ENCODE measurements at regions of chr11 and their contacts with region 1.

Region 1: GRCh38 chr11:120500414-120501071 is 11.0 kb upstream of the GRIK4 start:
- DNase-seq: peak in 1 of 2 donors; percentile 45
- ATAC-seq: peak in 1 of 2 donors; percentile 47
- H3K4me3 ChIP-seq: no peak overlapping the region
- H3K27ac ChIP-seq: no peak overlapping the region
- H3K4me1 ChIP-seq: peaks cover 0 to 5% of the 10 kb centered on the region in 2 donors
- H3K27me3 ChIP-seq: peaks cover 4 to 21% (median 14%) of the 10 kb centered on the region in 3 donors
- CTCF ChIP-seq: no peak
- POLR2A ChIP-seq: no peak

Region 2: GRCh38 chr11:120375076-120375475 is 125.5 kb before region 1 on chr11:
- in situ Hi-C with region 1: no loop called
- intact Hi-C with region 1: no loop called
- DNase-seq: no peak
- ATAC-seq: no peak
- H3K4me3 ChIP-seq: no peak overlapping the region
- H3K27ac ChIP-seq: peak overlapping the region; percentile 18 to 68 (median 26)
- H3K4me1 ChIP-seq: peaks cover 50 to 52% of the 10 kb centered on the region in 2 donors
- H3K27me3 ChIP-seq: no peaks in the 10 kb centered on the region
- CTCF ChIP-seq: no peak
- POLR2A ChIP-seq: no peak

Region 3: GRCh38 chr11:120682866-120683265 is 182.3 kb after region 1 on chr11:
- in situ Hi-C with region 1: loop called in 1 of 4 experiments (anchors 10 kb)
- intact Hi-C with region 1: no loop called
- DNase-seq: no peak
- ATAC-seq: no peak
- H3K4me3 ChIP-seq: no peak overlapping the region
- H3K27ac ChIP-seq: no peak overlapping the region
- H3K4me1 ChIP-seq: no peaks in the 10 kb centered on the region
- H3K27me3 ChIP-seq: peaks cover 0 to 5% (median 0%) of the 10 kb centered on the region in 3 donors
- CTCF ChIP-seq: no peak
- POLR2A ChIP-seq: no peak

Region 4: GRCh38 chr11:120801801-120802689 is 301.5 kb after region 1 on chr11:
- in situ Hi-C with region 1: no loop called
- intact Hi-C with region 1: loop called (anchors 10 kb)
- DNase-seq: no peak
- ATAC-seq: peak; percentile 39 to 50
- H3K4me3 ChIP-seq: no peak overlapping the region
- H3K27ac ChIP-seq: no peak overlapping the region
- H3K4me1 ChIP-seq: no peaks in the 10 kb centered on the region
- H3K27me3 ChIP-seq: no peaks in the 10 kb centered on the region
- CTCF ChIP-seq: peak; percentile 33 to 77 (median 63)
- POLR2A ChIP-seq: no peak

Region 5: GRCh38 chr11:120952461-120953434 is 452.2 kb after region 1 on chr11:
- in situ Hi-C with region 1: loop called (anchors 10 to 25 kb)
- intact Hi-C with region 1: no loop called
- DNase-seq: peak; percentile 35 to 57
- ATAC-seq: peak; percentile 86 to 87
- H3K4me3 ChIP-seq: peak overlapping the region in 2 of 4 donors; percentile 22 to 50
- H3K27ac ChIP-seq: no peak overlapping the region
- H3K4me1 ChIP-seq: peaks cover 0 to 5% of the 10 kb centered on the region in 2 donors
- H3K27me3 ChIP-seq: peaks cover 6 to 10% (median 10%) of the 10 kb centered on the region in 3 donors
- CTCF ChIP-seq: peak; percentile 44 to 74 (median 51)
- POLR2A ChIP-seq: no peak

Measured in gastrocnemius medialis (tissue), 4 donors.